ENCODE measurements at regions of chrX and their contacts with region 1.

Region 1: GRCh38 chrX:30504309-30504708 is 73.3 kb downstream of the TASL start:
- DNase-seq: peak; percentile 71
- H3K4me3 ChIP-seq: no peak overlapping the region
- H3K27ac ChIP-seq: no peak overlapping the region
- H3K4me1 ChIP-seq: peaks cover 12% of the 10 kb centered on the region
- H3K27me3 ChIP-seq: no peaks in the 10 kb centered on the region
- CTCF ChIP-seq: peak; percentile 64; the same call in 1 of the 2 replicates

Region 2: GRCh38 chrX:28966331-28966730 is 1538.0 kb before region 1 on chrX:
- CTCF ChIA-PET with region 1: no interaction called
- POLR2A ChIA-PET with region 1: no interaction called
- intact Hi-C with region 1: no loop called
- DNase-seq: no peak
- H3K4me3 ChIP-seq: no peak overlapping the region
- H3K27ac ChIP-seq: no peak overlapping the region
- H3K4me1 ChIP-seq: no peaks in the 10 kb centered on the region
- H3K27me3 ChIP-seq: no peaks in the 10 kb centered on the region
- CTCF ChIP-seq: no peak

Region 3: GRCh38 chrX:29926056-29926455 is 578.3 kb before region 1 on chrX:
- CTCF ChIA-PET with region 1: no interaction called
- POLR2A ChIA-PET with region 1: no interaction called
- intact Hi-C with region 1: loop called (anchors 10 kb)
- DNase-seq: no peak
- H3K4me3 ChIP-seq: no peak overlapping the region
- H3K27ac ChIP-seq: no peak overlapping the region
- H3K4me1 ChIP-seq: no peaks in the 10 kb centered on the region
- H3K27me3 ChIP-seq: no peaks in the 10 kb centered on the region
- CTCF ChIP-seq: no peak

Region 4: GRCh38 chrX:30275498-30275897 is 228.8 kb before region 1 on chrX:
- CTCF ChIA-PET with region 1: interaction called, 7 read pairs
- POLR2A ChIA-PET with region 1: no interaction called
- intact Hi-C with region 1: loop called (anchors 5 kb)
- DNase-seq: peak; percentile 38
- H3K4me3 ChIP-seq: no peak overlapping the region
- H3K27ac ChIP-seq: no peak overlapping the region
- H3K4me1 ChIP-seq: no peaks in the 10 kb centered on the region
- H3K27me3 ChIP-seq: no peaks in the 10 kb centered on the region
- CTCF ChIP-seq: peak; percentile 60